ENCODE measurements at regions of chr6 and their contacts with region 1.

Region 1: DNA sequence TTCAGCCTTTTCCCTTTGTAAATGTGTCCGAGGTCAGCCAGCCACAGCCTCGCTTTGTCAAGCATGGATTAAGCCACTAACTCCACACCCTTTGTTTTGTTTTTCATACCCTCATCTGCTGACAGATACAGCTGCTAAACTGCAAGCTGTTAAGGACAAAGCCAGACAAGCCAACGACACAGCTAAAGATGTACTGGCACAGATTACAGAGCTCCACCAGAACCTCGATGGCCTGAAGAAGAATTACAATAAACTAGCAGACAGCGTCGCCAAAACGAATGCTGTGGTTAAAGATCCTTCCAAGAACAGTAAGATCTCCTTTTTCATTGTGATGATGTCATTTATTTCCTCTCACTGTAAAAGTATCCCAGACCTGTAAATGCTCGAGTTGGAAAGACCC is 269.3 kb downstream of the ARHGAP18 start:
- DNase-seq: peak; percentile 3
- H3K4me3 ChIP-seq: no peak overlapping the region
- H3K27ac ChIP-seq: no peak overlapping the region
- H3K4me1 ChIP-seq: no peaks in the 10 kb centered on the region
- H3K27me3 ChIP-seq: no peaks in the 10 kb centered on the region
- CTCF ChIP-seq: no peak
- POLR2A ChIP-seq: no peak

Region 2: DNA sequence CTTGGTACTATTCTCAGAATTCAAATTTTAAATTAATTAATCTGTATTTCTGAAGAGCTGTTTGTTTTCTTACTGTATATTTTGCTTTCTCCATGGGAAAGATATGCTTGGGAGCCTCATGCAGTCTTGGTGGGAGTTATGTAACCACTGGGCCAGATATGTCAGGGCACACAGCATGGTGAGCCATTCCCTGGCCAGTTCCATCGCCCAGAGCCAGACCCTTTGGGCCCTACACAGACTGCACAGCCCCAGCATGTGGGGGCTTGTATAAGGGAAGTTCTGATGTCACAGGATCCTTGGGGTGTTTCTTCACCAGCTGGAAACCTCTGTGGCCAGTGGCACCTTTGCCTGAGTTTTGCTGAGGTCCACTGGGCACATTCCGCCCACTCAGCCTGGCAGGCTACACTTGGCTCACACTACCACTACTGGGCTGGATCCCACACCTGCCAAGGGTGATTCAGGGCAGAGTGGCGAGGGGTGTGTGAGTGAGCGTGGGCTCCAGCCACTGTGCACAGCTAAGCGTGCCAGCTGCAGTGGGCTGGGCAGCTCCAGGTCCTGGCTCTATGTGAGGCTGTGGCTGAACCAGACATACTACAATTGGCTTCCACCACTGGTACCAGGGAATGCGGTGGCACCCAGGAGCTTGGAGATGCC is 24.2 kb before region 1 on chr6:
- CTCF ChIA-PET with region 1: no interaction called
- POLR2A ChIA-PET with region 1: no interaction called
- dilution Hi-C with region 1: no loop called
- intact Hi-C with region 1: loop called (anchors 2 kb)
- DNase-seq: no peak
- H3K4me3 ChIP-seq: no peak overlapping the region
- H3K27ac ChIP-seq: no peak overlapping the region
- H3K4me1 ChIP-seq: no peaks in the 10 kb centered on the region
- H3K27me3 ChIP-seq: no peaks in the 10 kb centered on the region
- CTCF ChIP-seq: no peak
- POLR2A ChIP-seq: no peak

Measured in endothelial cell of umbilical vein (primary cell).